Dendritic cell treated with granulocyte-macrophage colony-stimulating factor and Interleukin-4, amounts not matched to agents 40 ng/mL and 50 ng/mL, for 4 days (primary cell): ENCODE measurements at regions of chr11 and their contacts with region 1.

Region 1: GRCh38 chr11:8263769-8264410 is at the start of gene LMO1:
- H3K4me3 Mint-ChIP-seq: peak within 1 kb of the TSS; percentile 63
- H3K27ac Mint-ChIP-seq: no peak within 1 kb of the TSS
- H3K4me1 Mint-ChIP-seq: peaks cover 17% of the 10 kb centered on the region
- H3K27me3 Mint-ChIP-seq: peaks cover 92% of the 10 kb centered on the region

Region 2: GRCh38 chr11:7904914-7905313 is 359.0 kb before region 1 on chr11:
- intact Hi-C with region 1: no loop called
- H3K4me3 Mint-ChIP-seq: no peak overlapping the region
- H3K27ac Mint-ChIP-seq: no peak overlapping the region
- H3K4me1 Mint-ChIP-seq: no peaks in the 10 kb centered on the region
- H3K27me3 Mint-ChIP-seq: no peaks in the 10 kb centered on the region

Region 3: GRCh38 chr11:8192016-8192895 is 71.6 kb before region 1 on chr11:
- intact Hi-C with region 1: loop called (anchors 1 kb)
- H3K4me3 Mint-ChIP-seq: no peak overlapping the region
- H3K27ac Mint-ChIP-seq: no peak overlapping the region
- H3K4me1 Mint-ChIP-seq: peaks cover 35% of the 10 kb centered on the region
- H3K27me3 Mint-ChIP-seq: peaks cover 1% of the 10 kb centered on the region

Region 4: DNA sequence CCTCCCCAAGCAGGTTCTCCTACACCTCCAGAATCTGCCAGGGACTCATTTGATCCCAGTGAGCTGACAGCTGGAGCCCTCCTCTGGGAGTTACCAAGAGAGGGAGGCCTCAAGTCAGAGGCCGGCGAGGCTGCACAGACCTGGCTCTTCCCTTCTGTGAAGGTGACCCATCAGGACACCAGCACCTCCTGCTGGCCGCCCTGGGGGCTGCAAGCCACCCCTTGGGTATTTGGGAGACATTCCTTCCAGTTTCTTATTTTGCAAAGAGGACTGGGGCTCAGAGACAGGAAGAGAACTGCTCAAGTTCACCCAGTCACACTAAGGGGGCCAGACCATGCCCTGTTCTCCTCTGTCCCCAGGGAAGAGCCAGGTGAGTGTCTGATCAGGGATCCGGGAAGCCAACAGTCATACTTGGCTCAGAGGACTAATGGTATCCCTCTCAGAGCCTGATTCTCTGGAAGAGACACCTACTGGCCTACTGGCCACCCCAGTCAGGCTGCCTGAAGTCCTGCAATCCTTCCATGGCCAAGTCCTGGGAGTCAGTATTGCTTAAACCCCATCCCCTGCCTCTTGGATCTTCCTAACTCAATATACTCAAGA is 54.6 kb before region 1 on chr11:
- intact Hi-C with region 1: loop called (anchors 5 kb)
- H3K4me3 Mint-ChIP-seq: no peak overlapping the region
- H3K27ac Mint-ChIP-seq: peak overlapping the region; percentile 91
- H3K4me1 Mint-ChIP-seq: peaks cover 61% of the 10 kb centered on the region
- H3K27me3 Mint-ChIP-seq: peaks cover 2% of the 10 kb centered on the region

Region 5: GRCh38 chr11:8225589-8226036 is 38.3 kb before region 1 on chr11:
- intact Hi-C with region 1: loop called (anchors 1 kb)
- H3K4me3 Mint-ChIP-seq: no peak overlapping the region
- H3K27ac Mint-ChIP-seq: no peak overlapping the region
- H3K4me1 Mint-ChIP-seq: peaks cover 10% of the 10 kb centered on the region
- H3K27me3 Mint-ChIP-seq: peaks cover 7% of the 10 kb centered on the region

Region 6: DNA sequence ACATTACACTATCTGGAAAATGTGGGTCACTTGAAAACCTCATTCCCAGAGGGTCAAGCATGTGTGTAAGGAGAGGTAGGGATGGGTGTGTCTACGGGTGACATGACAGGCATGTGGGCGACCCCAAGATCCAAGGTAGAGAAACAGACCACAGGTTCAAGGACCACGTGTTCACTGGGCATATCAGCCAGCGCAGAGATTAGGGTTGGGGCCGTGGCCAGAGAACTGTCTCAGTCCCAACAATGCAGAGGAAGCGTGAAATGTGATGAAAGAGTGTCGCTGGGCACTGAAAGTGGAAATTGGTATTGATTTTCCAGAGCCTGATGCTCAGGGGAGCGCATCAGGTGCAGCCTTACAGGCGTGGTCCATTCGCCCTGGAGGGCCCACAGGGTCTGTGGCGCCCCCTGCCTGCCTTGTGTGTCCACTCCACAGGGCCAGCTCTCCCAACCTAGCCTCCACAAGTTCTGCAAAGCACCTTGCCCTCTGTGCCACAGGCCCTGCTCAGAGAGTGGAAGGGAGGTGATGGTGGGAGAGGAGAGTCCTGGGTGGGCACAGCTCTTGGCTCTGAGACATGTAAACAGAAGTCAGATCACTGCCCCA is 54.5 kb after region 1 on chr11:
- intact Hi-C with region 1: no loop called
- H3K4me3 Mint-ChIP-seq: no peak overlapping the region
- H3K27ac Mint-ChIP-seq: no peak overlapping the region
- H3K4me1 Mint-ChIP-seq: peaks cover 10% of the 10 kb centered on the region
- H3K27me3 Mint-ChIP-seq: peaks cover 8% of the 10 kb centered on the region

Region 7: DNA sequence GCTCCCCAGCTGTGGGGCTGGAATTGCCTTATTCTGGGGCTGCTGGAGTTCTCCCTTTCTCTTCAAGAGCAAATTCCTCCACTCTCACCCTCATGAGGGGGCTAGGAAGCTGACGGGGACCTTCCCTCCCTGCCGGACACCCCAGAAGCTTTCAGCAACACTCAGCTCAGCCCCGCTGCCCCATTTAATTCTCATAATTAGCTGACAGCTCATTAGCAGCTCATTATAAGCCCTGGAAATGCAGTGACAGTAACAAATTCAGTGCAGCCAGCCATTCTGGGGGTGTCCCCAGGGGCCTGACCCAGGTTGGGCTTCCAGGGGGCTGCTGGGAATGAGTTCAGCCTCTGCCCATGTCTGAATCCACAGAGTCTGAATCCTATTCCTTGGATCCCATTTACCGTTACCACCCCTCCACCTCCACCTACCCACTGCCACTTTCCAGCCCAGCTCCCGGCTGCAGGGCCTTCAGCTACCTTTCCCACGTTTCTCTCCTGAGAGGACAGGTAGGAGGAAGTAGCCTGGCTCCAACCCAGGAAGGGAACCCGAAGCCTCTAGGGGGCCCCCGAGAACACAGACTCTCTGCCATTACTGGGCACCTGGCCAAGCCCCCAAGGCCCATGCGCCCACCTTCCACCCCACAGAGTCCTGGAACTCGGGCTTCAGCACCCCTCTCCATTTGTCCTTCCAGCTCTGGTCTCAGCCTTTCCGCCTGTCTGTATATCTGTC is 101.5 kb after region 1 on chr11:
- intact Hi-C with region 1: no loop called
- H3K4me3 Mint-ChIP-seq: no peak overlapping the region
- H3K27ac Mint-ChIP-seq: no peak overlapping the region
- H3K4me1 Mint-ChIP-seq: peaks cover 30% of the 10 kb centered on the region
- H3K27me3 Mint-ChIP-seq: no peaks in the 10 kb centered on the region